CD4-positive, alpha-beta T cell (primary cell): ENCODE measurements at regions of chr14 and their contacts with region 1.

Region 1: DNA sequence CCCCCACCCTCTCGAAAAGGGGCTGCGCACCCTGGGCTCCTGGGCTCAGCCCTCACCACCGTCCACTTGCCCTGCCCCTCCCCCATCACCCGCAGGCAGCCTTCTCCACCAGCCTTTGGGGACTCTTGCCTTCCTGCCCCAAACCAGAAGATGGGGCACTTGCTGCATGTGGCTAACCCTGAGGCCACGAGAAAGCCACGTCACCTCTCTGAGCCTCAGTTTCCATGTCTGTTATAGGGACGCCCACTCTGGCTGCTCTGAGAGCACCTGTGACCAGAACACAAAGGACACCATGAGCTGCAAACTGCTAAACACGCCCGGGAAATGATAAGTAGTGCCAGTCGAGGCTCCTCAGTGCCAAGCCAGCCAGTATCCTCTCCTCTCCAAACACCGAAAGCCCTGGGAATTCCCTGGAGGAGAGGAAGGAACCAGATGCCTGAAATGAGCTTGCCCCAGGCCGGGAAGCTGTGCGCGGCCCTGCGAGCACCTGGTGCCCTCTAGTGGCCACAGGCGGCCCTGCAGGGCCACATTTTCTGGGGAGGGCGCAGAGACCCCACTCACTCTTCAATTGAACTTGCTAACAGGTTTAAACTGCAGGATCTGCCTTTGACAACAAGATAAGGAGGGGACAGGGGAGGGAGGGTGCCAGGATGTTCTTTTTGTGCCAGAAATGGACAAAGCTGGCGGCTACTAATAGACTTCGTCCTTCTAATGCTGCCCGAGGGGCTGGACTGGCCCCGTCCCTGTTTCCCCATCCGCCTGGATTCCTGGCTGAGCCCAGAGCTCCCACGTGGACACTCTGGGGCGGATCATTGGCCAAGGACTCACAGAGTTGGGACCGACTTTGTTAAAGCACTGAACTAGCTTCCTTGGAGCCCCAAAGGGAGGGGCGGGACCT is 10.2 kb upstream of the SERPINA9 start:
- DNase-seq: peak in 12 of 14 experiments; percentile 9 to 57 (median 24)
- ATAC-seq: peak; percentile 51
- H3K4me3 ChIP-seq: no peak overlapping the region
- H3K4me3 Mint-ChIP-seq: no peak overlapping the region
- H3K27ac ChIP-seq: no peak overlapping the region
- H3K27ac Mint-ChIP-seq: no peak overlapping the region
- H3K4me1 ChIP-seq: peaks cover 7% of the 10 kb centered on the region
- H3K4me1 Mint-ChIP-seq: peaks cover 6% of the 10 kb centered on the region
- H3K27me3 ChIP-seq: peaks cover 9 to 17% of the 10 kb centered on the region in 2 experiments
- H3K27me3 Mint-ChIP-seq: peaks cover 27% of the 10 kb centered on the region
- CTCF ChIP-seq: peak; percentile 91

Region 2: DNA sequence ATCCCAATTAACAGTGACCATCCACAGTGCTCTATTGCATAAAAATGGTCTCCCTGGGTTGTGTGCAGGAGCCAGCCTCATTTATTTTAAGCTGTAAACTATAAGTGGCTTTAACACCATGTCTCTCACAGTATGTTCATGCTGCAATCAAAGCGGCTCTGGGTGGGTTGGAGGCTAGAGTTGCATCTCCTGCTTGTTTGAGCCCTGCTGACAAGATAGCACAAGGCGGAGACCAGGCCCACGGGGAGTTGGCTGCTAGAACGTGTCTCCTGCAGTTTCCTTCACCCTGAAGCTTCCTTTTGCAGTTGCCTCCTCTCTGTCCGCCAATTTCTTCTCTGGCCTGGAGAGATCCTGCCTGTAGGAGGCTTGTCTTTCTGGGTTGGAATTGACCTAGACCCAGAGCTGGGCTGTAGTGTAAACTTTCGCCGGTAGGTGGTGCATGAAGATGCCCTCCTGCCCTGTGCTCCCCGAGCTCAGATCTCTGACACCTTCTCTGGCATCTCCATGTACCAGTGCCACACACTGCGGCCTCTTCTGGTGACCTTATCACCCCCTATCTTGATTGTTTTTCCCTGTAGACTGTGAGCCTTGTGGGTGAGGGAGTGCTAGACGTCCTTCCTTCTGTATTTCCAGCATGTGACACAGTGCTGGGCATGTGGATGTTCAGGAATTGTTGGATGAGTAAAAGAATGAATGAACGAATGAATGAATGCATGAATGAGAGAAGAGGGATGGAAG is 449.7 kb before region 1 on chr14:
- CTCF ChIA-PET with region 1: interaction called, 3 read pairs
- POLR2A ChIA-PET with region 1: no interaction called
- intact Hi-C with region 1: loop called in 1 of 2 experiments (anchors 5 kb)
- DNase-seq: peak; percentile 60 to 86 (median 70)
- ATAC-seq: peak; percentile 97
- H3K4me3 ChIP-seq: no peak overlapping the region
- H3K4me3 Mint-ChIP-seq: no peak overlapping the region
- H3K27ac ChIP-seq: no peak overlapping the region
- H3K27ac Mint-ChIP-seq: no peak overlapping the region
- H3K4me1 ChIP-seq: peaks cover 4% of the 10 kb centered on the region
- H3K4me1 Mint-ChIP-seq: peaks cover 4% of the 10 kb centered on the region
- H3K27me3 ChIP-seq: no peaks in the 10 kb centered on the region
- H3K27me3 Mint-ChIP-seq: no peaks in the 10 kb centered on the region
- CTCF ChIP-seq: peak; percentile 86

Region 3: GRCh38 chr14:94129111-94129757 is 357.0 kb before region 1 on chr14 and contains the start of gene IFI27L2:
- CTCF ChIA-PET with region 1: interaction called, 4 read pairs
- POLR2A ChIA-PET with region 1: no interaction called
- intact Hi-C with region 1: loop called in 1 of 2 experiments (anchors 1 kb)
- DNase-seq: peak; percentile 27 to 84 (median 51)
- ATAC-seq: peak; percentile 93
- H3K4me3 ChIP-seq: peak within 1 kb of the TSS; percentile 73
- H3K4me3 Mint-ChIP-seq: peak within 1 kb of the TSS; percentile 88
- H3K27ac ChIP-seq: peak within 1 kb of the TSS in 1 of 2 donors; percentile 19
- H3K27ac Mint-ChIP-seq: peak within 1 kb of the TSS; percentile 45
- H3K4me1 ChIP-seq: peaks cover 18% of the 10 kb centered on the region
- H3K4me1 Mint-ChIP-seq: peaks cover 20% of the 10 kb centered on the region
- H3K27me3 ChIP-seq: no peaks in the 10 kb centered on the region
- H3K27me3 Mint-ChIP-seq: no peaks in the 10 kb centered on the region
- CTCF ChIP-seq: peak; percentile 41
- total RNA-seq, gene IFI27L2: 21.5 to 22.2 TPM

Region 4: GRCh38 chr14:94239406-94239805 is 246.8 kb before region 1 on chr14:
- CTCF ChIA-PET with region 1: no interaction called
- POLR2A ChIA-PET with region 1: no interaction called
- intact Hi-C with region 1: no loop called
- DNase-seq: no peak
- ATAC-seq: no peak
- H3K4me3 ChIP-seq: no peak overlapping the region
- H3K4me3 Mint-ChIP-seq: no peak overlapping the region
- H3K27ac ChIP-seq: no peak overlapping the region
- H3K27ac Mint-ChIP-seq: no peak overlapping the region
- H3K4me1 ChIP-seq: no peaks in the 10 kb centered on the region
- H3K4me1 Mint-ChIP-seq: no peaks in the 10 kb centered on the region
- H3K27me3 ChIP-seq: no peaks in the 10 kb centered on the region
- H3K27me3 Mint-ChIP-seq: peaks cover 3% of the 10 kb centered on the region
- CTCF ChIP-seq: no peak

Region 5: GRCh38 chr14:94355191-94355797 is 130.9 kb before region 1 on chr14:
- CTCF ChIA-PET with region 1: no interaction called
- POLR2A ChIA-PET with region 1: no interaction called
- intact Hi-C with region 1: loop called in 1 of 2 experiments (anchors 1 kb)
- DNase-seq: peak in 3 of 14 experiments; percentile 20 to 28 (median 27)
- ATAC-seq: no peak
- H3K4me3 ChIP-seq: no peak overlapping the region
- H3K4me3 Mint-ChIP-seq: no peak overlapping the region
- H3K27ac ChIP-seq: no peak overlapping the region
- H3K27ac Mint-ChIP-seq: no peak overlapping the region
- H3K4me1 ChIP-seq: no peaks in the 10 kb centered on the region
- H3K4me1 Mint-ChIP-seq: no peaks in the 10 kb centered on the region
- H3K27me3 ChIP-seq: peaks cover 0 to 3% of the 10 kb centered on the region in 2 experiments
- H3K27me3 Mint-ChIP-seq: no peaks in the 10 kb centered on the region
- CTCF ChIP-seq: no peak

Region 6: GRCh38 chr14:94476023-94476422 is 10.2 kb before region 1 on chr14 and contains the start of gene SERPINA9:
- CTCF ChIA-PET with region 1: interaction called, 11 read pairs
- POLR2A ChIA-PET with region 1: no interaction called
- intact Hi-C with region 1: no loop called
- DNase-seq: no peak
- ATAC-seq: no peak
- H3K4me3 ChIP-seq: no peak within 1 kb of the TSS
- H3K4me3 Mint-ChIP-seq: no peak within 1 kb of the TSS
- H3K27ac ChIP-seq: no peak within 1 kb of the TSS
- H3K27ac Mint-ChIP-seq: no peak within 1 kb of the TSS
- H3K4me1 ChIP-seq: no peaks in the 10 kb centered on the region
- H3K4me1 Mint-ChIP-seq: no peaks in the 10 kb centered on the region
- H3K27me3 ChIP-seq: peaks cover 0 to 3% of the 10 kb centered on the region in 2 experiments
- H3K27me3 Mint-ChIP-seq: peaks cover 6% of the 10 kb centered on the region
- CTCF ChIP-seq: no peak
- total RNA-seq, gene SERPINA9: not detected